Breast epithelium (tissue), 4 donors: ENCODE measurements at regions of chrX and their contacts with region 1.

Region 1: GRCh38 chrX:13864264-13864663 is 47.4 kb upstream of the GPM6B start:
- DNase-seq: no peak
- H3K4me3 ChIP-seq: no peak overlapping the region
- H3K27ac ChIP-seq: peak overlapping the region in 1 of 2 donors; percentile 56
- H3K4me1 ChIP-seq: no peaks in the 10 kb centered on the region
- H3K27me3 ChIP-seq: peaks cover 0 to 40% of the 10 kb centered on the region in 2 donors
- CTCF ChIP-seq: no peak
- POLR2A ChIP-seq: no peak

Region 2: GRCh38 chrX:13793897-13794296 is 70.4 kb before region 1 on chrX:
- intact Hi-C with region 1: loop called (anchors 2 kb)
- DNase-seq: no peak
- H3K4me3 ChIP-seq: no peak overlapping the region
- H3K27ac ChIP-seq: no peak overlapping the region
- H3K4me1 ChIP-seq: no peaks in the 10 kb centered on the region
- H3K27me3 ChIP-seq: peaks cover 0 to 33% of the 10 kb centered on the region in 2 donors
- CTCF ChIP-seq: no peak
- POLR2A ChIP-seq: no peak

Region 3: GRCh38 chrX:14427614-14428013 is 563.4 kb after region 1 on chrX:
- intact Hi-C with region 1: no loop called
- DNase-seq: no peak
- H3K4me3 ChIP-seq: no peak overlapping the region
- H3K27ac ChIP-seq: no peak overlapping the region
- H3K4me1 ChIP-seq: no peaks in the 10 kb centered on the region
- H3K27me3 ChIP-seq: peaks cover 0 to 19% of the 10 kb centered on the region in 2 donors
- CTCF ChIP-seq: no peak
- POLR2A ChIP-seq: no peak